Aorta (tissue), 5 donors: ENCODE measurements at regions of chr9 and their contacts with region 1.

Region 1: GRCh38 chr9:136170006-136170901 is 34.7 kb downstream of the LHX3 start:
- DNase-seq: peak in 1 of 2 donors; percentile 44
- ATAC-seq: peak; percentile 42
- H3K4me3 ChIP-seq: no peak overlapping the region
- H3K27ac ChIP-seq: no peak overlapping the region
- H3K4me1 ChIP-seq: no peaks in the 10 kb centered on the region
- H3K27me3 ChIP-seq: no peaks in the 10 kb centered on the region

Region 2: GRCh38 chr9:135308821-135309762 is 861.2 kb before region 1 on chr9:
- intact Hi-C with region 1: no loop called
- DNase-seq: no peak
- ATAC-seq: no peak
- H3K4me3 ChIP-seq: no peak overlapping the region
- H3K27ac ChIP-seq: no peak overlapping the region
- H3K4me1 ChIP-seq: no peaks in the 10 kb centered on the region
- H3K27me3 ChIP-seq: peaks cover 0 to 2% of the 10 kb centered on the region in 2 donors

Region 3: DNA sequence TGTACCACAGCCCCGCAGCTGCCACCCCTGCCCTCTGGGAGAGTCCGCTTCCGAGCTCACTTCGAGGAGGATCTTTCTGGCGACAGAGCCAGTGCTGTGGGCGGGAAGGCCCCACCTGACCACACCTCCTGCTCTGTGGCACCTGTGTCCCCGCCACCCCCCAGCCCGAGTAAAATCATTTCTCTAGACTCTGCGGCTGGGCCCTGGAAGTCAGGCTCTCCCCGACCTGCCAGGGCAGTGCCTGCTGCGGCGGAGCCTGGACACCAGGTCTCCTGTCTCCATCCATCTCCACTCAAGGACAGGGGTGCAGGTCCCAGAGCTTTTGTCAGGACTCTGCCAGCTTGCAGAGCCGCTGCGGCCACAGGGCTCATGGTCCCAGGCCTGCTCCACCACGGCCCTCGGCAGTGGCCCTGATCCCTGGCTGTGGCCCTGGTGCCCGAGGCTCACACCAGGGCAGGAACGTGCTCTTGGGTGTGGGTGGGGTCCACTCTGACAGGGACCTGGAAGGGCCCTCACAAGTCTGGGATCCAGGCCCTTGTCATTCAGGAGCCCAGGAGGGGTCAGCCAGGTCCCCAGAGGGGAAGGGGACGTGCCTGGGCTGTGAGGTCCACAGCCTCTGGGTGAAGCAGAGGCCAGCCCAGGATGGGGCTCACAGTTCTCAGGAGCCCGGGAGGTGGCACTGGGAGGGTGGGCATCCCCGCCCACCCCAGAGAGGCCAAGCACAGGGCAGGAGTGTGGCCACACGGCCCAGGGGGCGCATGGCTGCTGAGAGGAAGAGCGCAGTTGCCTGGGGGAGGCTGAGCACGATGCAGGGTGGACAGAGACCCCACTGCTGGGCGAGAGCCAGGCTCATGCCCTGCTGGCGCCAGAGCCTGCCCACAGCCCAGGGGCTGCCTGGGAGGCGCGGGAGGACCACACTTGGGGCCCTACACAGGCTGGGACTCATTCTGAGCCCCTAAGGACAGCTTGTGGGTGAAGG is 241.9 kb before region 1 on chr9:
- intact Hi-C with region 1: no loop called
- DNase-seq: peak in 1 of 2 donors; percentile 64
- ATAC-seq: no peak
- H3K4me3 ChIP-seq: no peak overlapping the region
- H3K27ac ChIP-seq: no peak overlapping the region
- H3K4me1 ChIP-seq: no peaks in the 10 kb centered on the region
- H3K27me3 ChIP-seq: no peaks in the 10 kb centered on the region

Region 4: GRCh38 chr9:136283291-136284235 is 113.3 kb after region 1 on chr9:
- intact Hi-C with region 1: loop called in 1 of 2 experiments (anchors 10 kb)
- DNase-seq: peak; percentile 84 to 93
- ATAC-seq: peak; percentile 90
- H3K4me3 ChIP-seq: peak overlapping the region in 1 of 2 donors; percentile 17
- H3K27ac ChIP-seq: peak overlapping the region in 1 of 2 donors; percentile 8
- H3K4me1 ChIP-seq: no peaks in the 10 kb centered on the region
- H3K27me3 ChIP-seq: no peaks in the 10 kb centered on the region